K562 (cell line): ENCODE measurements at regions of chr2 and their contacts with region 1.

Region 1: GRCh38 chr2:37973615-37974353 is 48.7 kb downstream of the RMDN2 start:
- DNase-seq: no peak
- ATAC-seq: no peak
- H3K4me3 ChIP-seq: no peak overlapping the region
- H3K27ac ChIP-seq: no peak overlapping the region
- H3K4me1 ChIP-seq: no peaks in the 10 kb centered on the region
- H3K27me3 ChIP-seq: no peaks in the 10 kb centered on the region; a peak in 2 of 5 replicates
- CTCF ChIP-seq: no peak
- EP300 ChIP-seq: no peak
- POLR2A ChIP-seq: no peak
- RAD21 ChIP-seq: no peak

Region 2: GRCh38 chr2:37832590-37833197 is 141.1 kb before region 1 on chr2:
- CTCF ChIA-PET with region 1: no interaction called
- POLR2A ChIA-PET with region 1: no interaction called
- in situ Hi-C with region 1: no loop called
- intact Hi-C with region 1: no loop called
- DNase-seq: peak; percentile 49 to 79 (median 62)
- ATAC-seq: peak; percentile 99
- H3K4me3 ChIP-seq: no peak overlapping the region
- H3K27ac ChIP-seq: no peak overlapping the region
- H3K4me1 ChIP-seq: no peaks in the 10 kb centered on the region
- H3K27me3 ChIP-seq: peaks cover 0 to under 1% of the 10 kb centered on the region in 2 experiments; a peak in 1 of 5 replicates
- CTCF ChIP-seq: peak; percentile 69 to 88 (median 73)
- EP300 ChIP-seq: no peak
- POLR2A ChIP-seq: no peak
- RAD21 ChIP-seq: peak; percentile 99

Region 3: GRCh38 chr2:38254796-38255195 is 281.0 kb after region 1 on chr2:
- CTCF ChIA-PET with region 1: no interaction called
- POLR2A ChIA-PET with region 1: no interaction called
- in situ Hi-C with region 1: loop called (anchors 10 kb)
- intact Hi-C with region 1: no loop called
- DNase-seq: no peak
- ATAC-seq: no peak; the same call in 2 of the 3 replicates
- H3K4me3 ChIP-seq: no peak overlapping the region
- H3K27ac ChIP-seq: no peak overlapping the region
- H3K4me1 ChIP-seq: no peaks in the 10 kb centered on the region
- H3K27me3 ChIP-seq: peaks cover 5 to 7% of the 10 kb centered on the region in 2 experiments; a peak in 3 of 5 replicates
- CTCF ChIP-seq: no peak
- EP300 ChIP-seq: no peak
- POLR2A ChIP-seq: no peak
- RAD21 ChIP-seq: no peak